ENCODE measurements at regions of chr12 and their contacts with region 1.

Region 1: DNA sequence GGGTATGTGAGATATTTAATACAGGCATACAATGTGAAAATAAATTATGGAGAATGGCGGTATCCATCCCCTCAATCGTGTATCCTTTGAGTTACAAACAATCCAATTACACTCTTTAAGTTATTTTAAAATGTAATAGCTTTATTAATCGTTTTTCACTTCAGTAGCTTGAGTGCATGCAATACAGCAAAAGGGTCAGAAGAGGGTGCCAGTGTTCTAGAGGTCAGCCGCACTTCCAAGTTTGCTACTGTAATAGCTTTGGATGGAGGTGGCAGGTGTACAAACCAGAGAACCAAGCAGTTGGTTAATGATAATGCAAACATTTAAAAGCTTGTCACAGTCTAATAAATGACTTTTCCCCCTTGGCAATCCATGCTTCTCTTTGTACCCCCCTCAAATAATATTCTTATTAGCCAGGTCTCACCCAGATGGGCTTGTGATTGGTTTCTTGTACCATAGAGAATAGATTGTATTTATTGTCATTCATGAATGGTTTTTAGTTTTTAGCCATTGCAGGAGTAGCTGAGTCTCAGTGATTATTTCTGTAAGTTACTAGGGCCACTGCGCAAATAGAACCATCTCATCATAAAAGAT is 127.0 kb downstream of the ERC1 start:
- DNase-seq: no peak
- ATAC-seq: peak; percentile 73
- H3K4me3 ChIP-seq: no peak overlapping the region
- H3K27ac ChIP-seq: no peak overlapping the region
- H3K4me1 ChIP-seq: peaks cover 4% of the 10 kb centered on the region; the same call in 1 of the 2 replicates
- H3K27me3 ChIP-seq: no peaks in the 10 kb centered on the region
- CTCF ChIP-seq: peak; percentile 80 to 87 (median 83)
- EP300 ChIP-seq: no peak
- POLR2A ChIP-seq: no peak
- RAD21 ChIP-seq: peak; percentile 97

Region 2: GRCh38 chr12:1099158-1099557 is 18.9 kb before region 1 on chr12:
- CTCF ChIA-PET with region 1: interaction called, 61 read pairs
- POLR2A ChIA-PET with region 1: interaction called, 5 read pairs
- RAD21 ChIA-PET with region 1: interaction called, 23 read pairs
- SMC1A ChIA-PET with region 1: interaction called, 33 read pairs
- in situ Hi-C with region 1: no loop called
- intact Hi-C with region 1: no loop called
- DNase-seq: peak; percentile 53
- ATAC-seq: peak; percentile 86
- H3K4me3 ChIP-seq: no peak overlapping the region
- H3K27ac ChIP-seq: peak overlapping the region; percentile 68
- H3K4me1 ChIP-seq: peaks cover 27% of the 10 kb centered on the region
- H3K27me3 ChIP-seq: no peaks in the 10 kb centered on the region
- CTCF ChIP-seq: no peak
- EP300 ChIP-seq: peak; percentile 44 to 73; a peak in 3 of 4 replicates
- POLR2A ChIP-seq: no peak
- RAD21 ChIP-seq: no peak

Region 3: GRCh38 chr12:1212526-1212925 is 94.5 kb after region 1 on chr12:
- CTCF ChIA-PET with region 1: interaction called, 36 read pairs
- POLR2A ChIA-PET with region 1: no interaction called
- RAD21 ChIA-PET with region 1: interaction called, 28 read pairs
- SMC1A ChIA-PET with region 1: interaction called, 23 read pairs
- in situ Hi-C with region 1: no loop called
- intact Hi-C with region 1: no loop called
- DNase-seq: no peak
- ATAC-seq: no peak
- H3K4me3 ChIP-seq: no peak overlapping the region
- H3K27ac ChIP-seq: no peak overlapping the region
- H3K4me1 ChIP-seq: no peaks in the 10 kb centered on the region
- H3K27me3 ChIP-seq: no peaks in the 10 kb centered on the region
- CTCF ChIP-seq: no peak
- EP300 ChIP-seq: no peak
- POLR2A ChIP-seq: no peak
- RAD21 ChIP-seq: no peak

Region 4: GRCh38 chr12:1300460-1300859 is 182.4 kb after region 1 on chr12:
- CTCF ChIA-PET with region 1: interaction called, 6 read pairs
- POLR2A ChIA-PET with region 1: no interaction called
- RAD21 ChIA-PET with region 1: no interaction called
- SMC1A ChIA-PET with region 1: interaction called, 10 read pairs
- in situ Hi-C with region 1: no loop called
- intact Hi-C with region 1: no loop called
- DNase-seq: no peak
- ATAC-seq: no peak
- H3K4me3 ChIP-seq: no peak overlapping the region
- H3K27ac ChIP-seq: no peak overlapping the region
- H3K4me1 ChIP-seq: no peaks in the 10 kb centered on the region
- H3K27me3 ChIP-seq: no peaks in the 10 kb centered on the region
- CTCF ChIP-seq: no peak
- EP300 ChIP-seq: no peak
- POLR2A ChIP-seq: no peak
- RAD21 ChIP-seq: no peak

Region 5: GRCh38 chr12:1517007-1517406 is 398.9 kb after region 1 on chr12:
- CTCF ChIA-PET with region 1: interaction called, 87 read pairs
- POLR2A ChIA-PET with region 1: no interaction called
- RAD21 ChIA-PET with region 1: interaction called, 36 read pairs
- SMC1A ChIA-PET with region 1: interaction called, 29 read pairs
- in situ Hi-C with region 1: no loop called
- intact Hi-C with region 1: loop called (anchors 5 kb)
- DNase-seq: no peak
- ATAC-seq: peak; percentile 83
- H3K4me3 ChIP-seq: no peak overlapping the region
- H3K27ac ChIP-seq: no peak overlapping the region
- H3K4me1 ChIP-seq: no peaks in the 10 kb centered on the region
- H3K27me3 ChIP-seq: no peaks in the 10 kb centered on the region
- CTCF ChIP-seq: peak; percentile 50 to 78 (median 71)
- EP300 ChIP-seq: no peak
- POLR2A ChIP-seq: no peak
- RAD21 ChIP-seq: peak; percentile 69

Region 6: DNA sequence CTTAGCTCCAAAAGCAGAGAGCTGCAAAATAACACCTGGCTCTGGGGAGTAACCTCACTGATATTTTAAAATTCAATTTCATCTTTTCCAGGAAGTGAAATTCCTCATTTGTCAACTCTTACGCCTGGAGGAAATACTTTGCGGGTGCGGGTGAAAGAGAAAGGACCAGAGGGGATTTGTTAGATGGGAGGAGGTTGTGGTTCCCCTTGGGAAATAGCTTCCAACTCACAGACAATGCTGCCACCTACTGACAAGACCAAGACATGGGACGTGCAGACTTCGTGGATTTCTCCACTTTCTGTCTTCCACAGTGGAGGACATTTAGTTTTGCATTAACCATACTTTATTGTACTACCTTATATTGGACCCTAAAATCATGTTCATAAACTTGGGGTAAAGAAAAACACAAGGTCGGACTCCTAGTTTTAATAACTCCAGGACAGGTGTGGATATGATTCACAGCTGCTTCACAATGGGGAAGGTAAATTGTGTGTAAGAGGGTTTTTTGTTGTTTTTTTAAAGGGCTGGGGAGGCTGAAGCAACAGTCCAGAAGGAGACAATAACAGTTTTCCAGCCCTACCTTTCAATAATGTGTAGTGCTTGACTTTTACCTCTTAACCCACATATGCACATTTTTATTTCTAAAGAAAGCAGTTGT is 465.5 kb after region 1 on chr12:
- CTCF ChIA-PET with region 1: interaction called, 287 read pairs
- POLR2A ChIA-PET with region 1: interaction called, 12 read pairs
- RAD21 ChIA-PET with region 1: interaction called, 237 read pairs
- SMC1A ChIA-PET with region 1: interaction called, 276 read pairs
- in situ Hi-C with region 1: loop called (anchors 5 kb)
- intact Hi-C with region 1: loop called (anchors 1 kb)
- DNase-seq: peak; percentile 77
- ATAC-seq: peak; percentile 81
- H3K4me3 ChIP-seq: no peak overlapping the region
- H3K27ac ChIP-seq: no peak overlapping the region
- H3K4me1 ChIP-seq: no peaks in the 10 kb centered on the region
- H3K27me3 ChIP-seq: no peaks in the 10 kb centered on the region
- CTCF ChIP-seq: peak; percentile 81 to 97 (median 86); a peak in 5 of 6 replicates
- EP300 ChIP-seq: peak in 1 of 2 experiments; percentile 48; a peak in 1 of 4 replicates
- POLR2A ChIP-seq: no peak
- RAD21 ChIP-seq: peak; percentile 98

Measured in GM12878 (cell line).